Heart right ventricle (tissue), 16 donors: ENCODE measurements at regions of chr2 and their contacts with region 1.

Region 1: DNA sequence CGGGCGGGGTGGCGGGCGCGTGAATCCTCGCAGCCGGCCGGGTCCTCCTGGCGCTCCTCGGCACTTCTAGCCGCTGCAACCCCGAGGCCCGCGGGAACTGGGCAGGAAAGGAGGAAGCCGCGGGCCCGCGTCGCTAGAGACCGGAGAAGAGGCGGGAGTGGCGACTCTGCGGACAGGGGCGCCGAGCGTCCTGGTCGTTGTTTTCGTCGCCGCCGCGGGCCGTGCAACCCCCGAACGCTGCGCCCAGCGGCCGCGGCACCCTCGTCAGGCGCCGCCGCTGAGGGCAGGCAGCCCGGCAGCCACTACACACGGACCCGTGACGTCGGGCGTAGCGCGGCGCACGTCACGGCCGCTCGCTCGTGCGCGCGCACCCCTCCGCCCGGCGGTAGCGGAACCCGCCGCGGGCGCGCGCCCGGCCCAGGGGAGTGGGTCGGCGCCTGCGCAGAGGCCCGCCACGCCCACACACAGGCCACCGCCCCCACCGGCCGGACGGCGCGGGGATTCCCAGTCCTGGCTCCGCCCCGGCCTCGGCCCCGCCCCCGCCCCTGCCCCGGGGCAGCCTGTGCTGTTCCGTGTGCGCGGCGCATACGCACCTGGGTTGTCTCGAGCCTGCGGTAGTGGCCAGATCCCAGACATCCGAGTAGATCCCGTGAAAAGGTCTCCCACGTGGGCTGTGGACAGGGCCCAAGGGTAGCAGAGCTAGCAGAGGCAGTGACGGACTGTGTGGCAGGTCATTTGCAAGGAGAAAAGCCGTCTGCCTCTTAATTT is at the start of gene MAP3K2:
- DNase-seq: peak; percentile 93 to 96
- ATAC-seq: peak; percentile 93 to 96 (median 94)
- H3K4me3 ChIP-seq: peak within 1 kb of the TSS; percentile 88 to 99 (median 98)
- H3K27ac ChIP-seq: peak within 1 kb of the TSS; percentile 99 to 100 (median 100)
- H3K4me1 ChIP-seq: peaks cover 0 to 73% (median 43%) of the 10 kb centered on the region in 9 donors
- H3K27me3 ChIP-seq: no peaks in the 10 kb centered on the region
- CTCF ChIP-seq: peak in 2 of 9 donors; percentile 5 to 7
- total RNA-seq, gene MAP3K2: 20.8 to 30.9 (median 26.4) TPM

Region 2: GRCh38 chr2:127408004-127408806 is 20.4 kb after region 1 on chr2:
- intact Hi-C with region 1: loop called in 3 of 10 experiments (anchors 1 to 2 kb)
- DNase-seq: peak; percentile 91 to 94
- ATAC-seq: peak; percentile 88 to 96 (median 94)
- H3K4me3 ChIP-seq: peak overlapping the region; percentile 28 to 72 (median 64)
- H3K27ac ChIP-seq: peak overlapping the region; percentile 63 to 97 (median 92)
- H3K4me1 ChIP-seq: peaks cover 0 to 69% (median 35%) of the 10 kb centered on the region in 9 donors
- H3K27me3 ChIP-seq: no peaks in the 10 kb centered on the region
- CTCF ChIP-seq: peak in 2 of 9 donors; percentile 12 to 15

Region 3: GRCh38 chr2:127448526-127448925 is 60.7 kb after region 1 on chr2:
- intact Hi-C with region 1: no loop called
- DNase-seq: no peak
- ATAC-seq: no peak
- H3K4me3 ChIP-seq: no peak overlapping the region
- H3K27ac ChIP-seq: no peak overlapping the region
- H3K4me1 ChIP-seq: no peaks in the 10 kb centered on the region
- H3K27me3 ChIP-seq: no peaks in the 10 kb centered on the region
- CTCF ChIP-seq: no peak